ENCODE measurements at regions of chr7 and their contacts with region 1.

Region 1: DNA sequence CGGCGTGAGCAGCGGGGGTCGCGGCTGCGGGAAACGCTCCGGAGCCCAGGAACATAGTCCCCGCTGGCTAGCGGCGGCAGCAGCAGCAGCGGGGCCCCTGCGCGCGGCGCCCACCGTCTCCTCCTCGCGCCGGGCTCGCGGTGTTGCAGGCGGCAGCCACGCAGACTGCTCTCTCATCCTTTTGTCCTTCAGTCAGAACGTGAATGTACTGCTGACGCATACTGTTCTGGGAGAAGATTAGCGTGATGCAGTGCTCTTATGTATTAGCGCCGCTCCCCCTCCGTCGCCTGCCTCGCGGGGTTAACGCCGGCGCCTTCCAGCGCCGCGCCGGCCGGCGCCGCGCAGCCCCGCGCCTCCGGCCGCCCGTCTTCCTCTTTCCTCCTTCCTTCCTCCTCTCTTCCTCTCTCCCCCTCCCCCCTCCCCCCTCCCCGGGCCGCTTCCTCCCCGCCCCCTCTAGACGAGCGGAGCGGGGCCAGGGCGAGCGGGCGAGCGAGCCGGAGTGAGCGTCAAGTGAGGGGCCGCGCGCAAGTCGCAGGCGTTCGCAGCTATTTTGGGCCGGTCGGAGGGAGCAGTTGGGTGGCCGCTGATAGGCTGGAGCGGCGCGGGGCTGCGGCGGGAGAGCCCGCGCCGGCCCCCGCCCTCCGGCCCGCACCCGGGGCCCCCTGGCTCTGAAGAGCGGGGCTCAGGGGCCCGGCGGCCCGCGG is 816 bp upstream of the LRRC4 start:
- DNase-seq: peak; percentile 20
- H3K4me3 Mint-ChIP-seq: peak overlapping the region; percentile 83
- H3K27ac Mint-ChIP-seq: no peak overlapping the region
- H3K4me1 Mint-ChIP-seq: no peaks in the 10 kb centered on the region
- H3K27me3 Mint-ChIP-seq: peaks cover 23% of the 10 kb centered on the region

Region 2: GRCh38 chr7:127230192-127230925 is 801.7 kb before region 1 on chr7:
- intact Hi-C with region 1: no loop called
- DNase-seq: no peak
- H3K4me3 Mint-ChIP-seq: no peak overlapping the region
- H3K27ac Mint-ChIP-seq: no peak overlapping the region
- H3K4me1 Mint-ChIP-seq: no peaks in the 10 kb centered on the region
- H3K27me3 Mint-ChIP-seq: peaks cover 12% of the 10 kb centered on the region

Region 3: DNA sequence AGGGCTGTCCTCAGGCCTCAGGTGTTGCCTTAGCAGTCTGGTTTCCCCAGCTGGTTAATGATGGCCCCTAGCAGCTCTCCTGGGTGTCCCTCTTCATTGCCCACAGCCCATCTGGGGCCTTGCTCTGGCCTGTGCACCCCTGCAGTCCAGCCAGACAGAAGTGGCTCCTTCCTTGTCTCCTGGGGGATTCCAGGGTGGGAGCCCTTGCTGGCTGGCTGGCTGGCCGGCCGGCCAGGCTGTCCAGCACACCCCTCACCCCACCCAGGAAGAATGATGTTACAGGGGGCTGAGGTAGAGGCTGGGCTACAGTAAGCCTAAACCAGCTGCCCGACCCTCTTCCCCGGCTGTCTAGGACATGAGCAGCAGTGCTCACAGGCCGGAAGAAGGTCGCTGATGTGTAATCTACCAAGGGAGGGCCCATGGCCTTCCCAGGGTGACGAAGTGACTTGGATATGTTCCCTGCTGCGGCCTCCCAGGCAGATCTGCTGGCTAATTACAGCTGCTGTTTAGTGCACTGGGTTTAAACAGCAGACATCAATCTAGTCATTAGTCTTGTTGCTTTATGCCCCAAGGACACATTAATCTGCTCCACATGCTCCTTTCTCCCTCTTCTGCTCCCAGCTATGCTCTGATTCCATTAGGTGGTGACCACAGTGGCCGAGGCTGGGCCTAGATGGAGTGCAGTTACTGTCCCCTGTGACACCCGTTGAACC is 53.0 kb after region 1 on chr7:
- intact Hi-C with region 1: no loop called
- DNase-seq: no peak
- H3K4me3 Mint-ChIP-seq: no peak overlapping the region
- H3K27ac Mint-ChIP-seq: no peak overlapping the region
- H3K4me1 Mint-ChIP-seq: no peaks in the 10 kb centered on the region
- H3K27me3 Mint-ChIP-seq: no peaks in the 10 kb centered on the region

Region 4: GRCh38 chr7:128104035-128104742 is 72.1 kb after region 1 on chr7:
- intact Hi-C with region 1: loop called (anchors 5 kb)
- DNase-seq: no peak
- H3K4me3 Mint-ChIP-seq: peak overlapping the region; percentile 89
- H3K27ac Mint-ChIP-seq: peak overlapping the region; percentile 36
- H3K4me1 Mint-ChIP-seq: peaks cover 29% of the 10 kb centered on the region
- H3K27me3 Mint-ChIP-seq: peaks cover 22% of the 10 kb centered on the region

Region 5: GRCh38 chr7:128115391-128116332 is 83.6 kb after region 1 on chr7:
- intact Hi-C with region 1: no loop called
- DNase-seq: no peak
- H3K4me3 Mint-ChIP-seq: no peak overlapping the region
- H3K27ac Mint-ChIP-seq: no peak overlapping the region
- H3K4me1 Mint-ChIP-seq: peaks cover 16% of the 10 kb centered on the region
- H3K27me3 Mint-ChIP-seq: peaks cover 6% of the 10 kb centered on the region